ENCODE measurements at regions of chr10 and their contacts with region 1.

Region 1: DNA sequence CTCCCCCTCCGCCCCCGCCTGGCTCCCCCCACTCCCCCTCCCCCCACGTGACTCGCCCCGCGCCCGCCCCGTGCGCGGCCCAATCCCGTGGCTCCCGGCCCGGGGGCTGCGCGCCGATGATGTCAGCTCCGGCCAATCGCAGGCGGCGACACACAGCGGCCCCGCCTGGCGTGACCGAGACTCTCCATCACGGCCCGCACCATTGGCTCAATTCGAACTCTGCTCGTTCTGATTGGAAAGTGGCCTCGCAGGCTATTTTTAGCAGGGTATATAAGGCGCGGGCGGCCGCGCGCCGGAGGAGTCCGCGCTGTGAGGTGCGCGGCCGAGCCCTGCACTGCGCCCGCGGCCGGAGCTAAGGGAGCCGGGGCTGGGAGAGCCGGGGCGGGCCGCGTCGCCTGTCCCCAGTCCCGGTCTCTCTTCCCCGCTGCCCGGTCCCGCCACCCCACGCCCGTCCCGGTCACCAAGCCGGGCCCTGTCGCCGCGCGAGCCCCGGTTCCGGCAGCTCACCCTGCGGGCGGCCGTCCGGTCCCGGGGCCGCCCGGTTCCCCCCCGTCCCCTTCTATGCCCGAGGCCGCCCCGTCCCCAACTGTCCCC is 345 bp upstream of the KLF6 start:
- DNase-seq: peak; percentile 100
- ATAC-seq: peak; percentile 78
- H3K4me3 ChIP-seq: peak overlapping the region in 4 of 5 experiments; percentile 90 to 99 (median 98)
- H3K4me3 Mint-ChIP-seq: peak overlapping the region; percentile 96
- H3K27ac ChIP-seq: peak overlapping the region; percentile 99 to 100
- H3K27ac Mint-ChIP-seq: peak overlapping the region; percentile 96
- H3K4me1 ChIP-seq: peaks cover 30 to 33% of the 10 kb centered on the region in 2 donors
- H3K4me1 Mint-ChIP-seq: peaks cover 31% of the 10 kb centered on the region
- H3K27me3 ChIP-seq: no peaks in the 10 kb centered on the region
- H3K27me3 Mint-ChIP-seq: no peaks in the 10 kb centered on the region
- CTCF ChIP-seq: no peak

Region 2: GRCh38 chr10:3757638-3758490 is 27.5 kb before region 1 on chr10:
- CTCF ChIA-PET with region 1: interaction called, 10 read pairs
- POLR2A ChIA-PET with region 1: interaction called, 25 read pairs
- intact Hi-C with region 1: loop called (anchors 1 kb)
- DNase-seq: peak; percentile 76
- ATAC-seq: peak; percentile 68
- H3K4me3 ChIP-seq: peak overlapping the region in 1 of 5 experiments; percentile 18
- H3K4me3 Mint-ChIP-seq: peak overlapping the region; percentile 67
- H3K27ac ChIP-seq: peak overlapping the region; percentile 60 to 63
- H3K27ac Mint-ChIP-seq: peak overlapping the region; percentile 92
- H3K4me1 ChIP-seq: peaks cover 49 to 55% of the 10 kb centered on the region in 2 donors
- H3K4me1 Mint-ChIP-seq: peaks cover 59% of the 10 kb centered on the region
- H3K27me3 ChIP-seq: no peaks in the 10 kb centered on the region
- H3K27me3 Mint-ChIP-seq: no peaks in the 10 kb centered on the region
- CTCF ChIP-seq: no peak

Region 3: GRCh38 chr10:3811291-3811870 is 26.0 kb after region 1 on chr10:
- CTCF ChIA-PET with region 1: no interaction called
- POLR2A ChIA-PET with region 1: interaction called, 40 read pairs
- intact Hi-C with region 1: no loop called
- DNase-seq: peak; percentile 75
- ATAC-seq: peak; percentile 95
- H3K4me3 ChIP-seq: peak overlapping the region in 3 of 5 experiments; percentile 6 to 32 (median 18)
- H3K4me3 Mint-ChIP-seq: peak overlapping the region; percentile 76
- H3K27ac ChIP-seq: peak overlapping the region; percentile 63 to 66
- H3K27ac Mint-ChIP-seq: peak overlapping the region; percentile 90
- H3K4me1 ChIP-seq: peaks cover 28 to 33% of the 10 kb centered on the region in 2 donors
- H3K4me1 Mint-ChIP-seq: peaks cover 41% of the 10 kb centered on the region
- H3K27me3 ChIP-seq: no peaks in the 10 kb centered on the region
- H3K27me3 Mint-ChIP-seq: no peaks in the 10 kb centered on the region
- CTCF ChIP-seq: no peak

Region 4: GRCh38 chr10:3873728-3874461 is 88.5 kb after region 1 on chr10:
- CTCF ChIA-PET with region 1: interaction called, 4 read pairs
- POLR2A ChIA-PET with region 1: interaction called, 23 read pairs
- intact Hi-C with region 1: loop called (anchors 1 kb)
- DNase-seq: peak; percentile 93
- ATAC-seq: peak; percentile 56
- H3K4me3 ChIP-seq: peak overlapping the region in 1 of 5 experiments; percentile 37
- H3K4me3 Mint-ChIP-seq: peak overlapping the region; percentile 57
- H3K27ac ChIP-seq: peak overlapping the region; percentile 89 to 99
- H3K27ac Mint-ChIP-seq: peak overlapping the region; percentile 98
- H3K4me1 ChIP-seq: peaks cover 44 to 50% of the 10 kb centered on the region in 2 donors
- H3K4me1 Mint-ChIP-seq: peaks cover 50% of the 10 kb centered on the region
- H3K27me3 ChIP-seq: no peaks in the 10 kb centered on the region
- H3K27me3 Mint-ChIP-seq: no peaks in the 10 kb centered on the region
- CTCF ChIP-seq: no peak

Region 5: GRCh38 chr10:3887885-3888476 is 102.6 kb after region 1 on chr10:
- CTCF ChIA-PET with region 1: no interaction called
- POLR2A ChIA-PET with region 1: no interaction called
- intact Hi-C with region 1: no loop called
- DNase-seq: peak; percentile 43
- ATAC-seq: peak; percentile 71
- H3K4me3 ChIP-seq: no peak overlapping the region
- H3K4me3 Mint-ChIP-seq: peak overlapping the region; percentile 15
- H3K27ac ChIP-seq: no peak overlapping the region
- H3K27ac Mint-ChIP-seq: peak overlapping the region; percentile 39
- H3K4me1 ChIP-seq: peaks cover 7 to 11% of the 10 kb centered on the region in 2 donors
- H3K4me1 Mint-ChIP-seq: peaks cover 23% of the 10 kb centered on the region
- H3K27me3 ChIP-seq: no peaks in the 10 kb centered on the region
- H3K27me3 Mint-ChIP-seq: peaks cover 6% of the 10 kb centered on the region
- CTCF ChIP-seq: no peak

Region 6: GRCh38 chr10:4131407-4132228 is 346.3 kb after region 1 on chr10:
- CTCF ChIA-PET with region 1: no interaction called
- POLR2A ChIA-PET with region 1: interaction called, 10 read pairs
- intact Hi-C with region 1: loop called (anchors 5 kb)
- DNase-seq: peak; percentile 79
- ATAC-seq: peak; percentile 71
- H3K4me3 ChIP-seq: peak overlapping the region in 4 of 5 experiments; percentile 0 to 51 (median 32)
- H3K4me3 Mint-ChIP-seq: no peak overlapping the region
- H3K27ac ChIP-seq: peak overlapping the region; percentile 21 to 71
- H3K27ac Mint-ChIP-seq: no peak overlapping the region
- H3K4me1 ChIP-seq: peaks cover 70 to 71% of the 10 kb centered on the region in 2 donors
- H3K4me1 Mint-ChIP-seq: peaks cover 45% of the 10 kb centered on the region
- H3K27me3 ChIP-seq: no peaks in the 10 kb centered on the region
- H3K27me3 Mint-ChIP-seq: no peaks in the 10 kb centered on the region
- CTCF ChIP-seq: no peak

Measured in B cell (primary cell).